AG04450 (cell line): ENCODE measurements at regions of chr12 and their contacts with region 1.

Region 1: DNA sequence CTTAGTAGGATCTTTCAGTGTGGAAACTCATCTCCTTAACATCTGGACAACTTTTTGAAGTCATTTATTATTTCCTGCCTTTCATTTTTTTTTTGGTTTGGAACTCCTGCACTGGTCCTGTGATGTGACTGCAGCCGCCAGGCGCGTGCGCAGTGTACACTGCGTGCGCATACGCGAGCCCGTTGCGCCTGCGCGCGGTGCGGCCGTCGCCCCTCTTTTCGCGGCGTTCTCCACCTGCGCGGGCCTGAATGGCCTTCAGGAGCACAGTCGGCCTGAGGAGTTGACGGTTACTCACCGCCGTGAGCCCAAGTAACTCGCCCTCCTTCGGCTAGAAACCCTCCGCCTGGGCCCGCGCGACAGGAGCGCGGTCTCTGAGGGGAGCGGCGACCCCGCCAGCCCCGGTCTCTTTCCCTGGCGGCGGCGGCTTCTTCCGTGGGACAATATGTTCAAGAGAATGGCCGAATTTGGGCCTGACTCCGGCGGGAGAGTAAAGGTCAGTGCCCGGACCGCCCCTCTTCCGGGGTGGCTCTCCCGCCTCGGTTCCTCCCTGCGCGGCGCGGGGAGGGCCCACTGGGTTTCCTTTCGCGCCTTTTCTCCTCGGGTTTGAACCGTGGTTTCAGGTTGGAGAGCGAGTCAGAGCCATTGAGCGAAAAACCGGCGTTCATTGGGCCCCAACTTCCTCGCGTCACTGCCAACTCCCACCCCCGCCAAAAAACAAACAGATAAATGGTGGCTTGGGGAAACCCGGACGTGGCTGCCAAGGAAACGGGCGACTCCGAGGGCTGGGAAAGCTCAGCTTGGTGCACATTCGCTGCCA is at the start of gene YEATS4:
- DNase-seq: peak; percentile 67
- H3K4me3 ChIP-seq: peak within 1 kb of the TSS; percentile 85
- H3K27ac ChIP-seq: peak within 1 kb of the TSS; percentile 95
- H3K27me3 ChIP-seq: no peaks in the 10 kb centered on the region
- CTCF ChIP-seq: no peak
- polyA plus RNA-seq, gene YEATS4: 8.1 and 13.0 TPM in 2 replicates

Region 2: GRCh38 chr12:69341328-69341727 is 18.4 kb before region 1 on chr12:
- CTCF ChIA-PET with region 1: interaction called, 24 read pairs
- POLR2A ChIA-PET with region 1: no interaction called
- DNase-seq: no peak
- H3K4me3 ChIP-seq: no peak overlapping the region
- H3K27ac ChIP-seq: no peak overlapping the region
- H3K27me3 ChIP-seq: peaks cover 31% of the 10 kb centered on the region
- CTCF ChIP-seq: no peak

Region 3: GRCh38 chr12:69540987-69541386 is 181.2 kb after region 1 on chr12:
- CTCF ChIA-PET with region 1: interaction called, 10 read pairs
- POLR2A ChIA-PET with region 1: no interaction called
- DNase-seq: peak; percentile 27
- H3K4me3 ChIP-seq: no peak overlapping the region
- H3K27ac ChIP-seq: no peak overlapping the region
- H3K27me3 ChIP-seq: no peaks in the 10 kb centered on the region
- CTCF ChIP-seq: peak; percentile 18; the same call in 1 of the 2 replicates

Region 4: DNA sequence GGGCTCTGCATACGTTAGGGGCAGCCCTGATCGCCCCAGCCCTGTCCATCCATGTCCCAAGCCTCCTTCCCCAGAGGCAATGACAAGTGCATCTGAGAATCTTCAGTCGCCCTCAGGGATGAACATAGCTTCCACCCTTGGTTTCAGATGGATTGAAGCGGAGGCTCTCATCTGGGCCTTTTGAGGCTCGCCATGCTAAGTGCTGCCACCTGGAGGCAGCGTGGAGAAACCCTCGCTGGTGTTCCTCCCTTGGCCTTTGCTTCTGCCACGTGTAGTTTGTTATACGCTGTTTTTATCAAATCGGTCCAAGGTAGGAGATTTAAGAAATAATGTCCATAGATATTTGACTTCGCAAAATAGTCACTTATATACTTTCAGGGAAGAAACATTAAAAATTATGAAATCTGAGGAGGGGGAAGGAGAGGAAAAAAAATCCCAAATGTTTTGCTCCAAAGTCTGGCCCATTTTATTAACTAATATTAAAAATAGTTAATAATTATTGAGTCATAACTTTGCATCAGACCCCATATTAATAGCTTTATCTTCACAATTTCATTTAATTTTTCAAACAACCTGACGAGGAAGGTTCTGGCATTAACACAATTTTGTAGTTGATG is 279.8 kb after region 1 on chr12:
- CTCF ChIA-PET with region 1: interaction called, 127 read pairs
- POLR2A ChIA-PET with region 1: no interaction called
- DNase-seq: peak; percentile 34
- H3K4me3 ChIP-seq: no peak overlapping the region
- H3K27ac ChIP-seq: no peak overlapping the region
- H3K27me3 ChIP-seq: no peaks in the 10 kb centered on the region
- CTCF ChIP-seq: peak; percentile 91

Region 5: GRCh38 chr12:69900720-69901131 is 541.0 kb after region 1 on chr12:
- CTCF ChIA-PET with region 1: interaction called, 12 read pairs
- POLR2A ChIA-PET with region 1: no interaction called
- DNase-seq: no peak
- H3K4me3 ChIP-seq: no peak overlapping the region
- H3K27ac ChIP-seq: no peak overlapping the region
- H3K27me3 ChIP-seq: no peaks in the 10 kb centered on the region
- CTCF ChIP-seq: peak; percentile 76